BJ (cell line): ENCODE measurements at regions of chr12 and their contacts with region 1.

Region 1: GRCh38 chr12:63843721-63844390 is 644 bp upstream of the SRGAP1 start:
- DNase-seq: peak; percentile 76
- H3K4me3 ChIP-seq: peak overlapping the region; percentile 93
- H3K27me3 ChIP-seq: no peaks in the 10 kb centered on the region
- CTCF ChIP-seq: peak; percentile 86

Region 2: GRCh38 chr12:62758216-62758615 is 1085.6 kb before region 1 on chr12:
- CTCF ChIA-PET with region 1: no interaction called
- POLR2A ChIA-PET with region 1: no interaction called
- DNase-seq: no peak
- H3K4me3 ChIP-seq: no peak overlapping the region
- H3K27me3 ChIP-seq: no peaks in the 10 kb centered on the region
- CTCF ChIP-seq: no peak

Region 3: DNA sequence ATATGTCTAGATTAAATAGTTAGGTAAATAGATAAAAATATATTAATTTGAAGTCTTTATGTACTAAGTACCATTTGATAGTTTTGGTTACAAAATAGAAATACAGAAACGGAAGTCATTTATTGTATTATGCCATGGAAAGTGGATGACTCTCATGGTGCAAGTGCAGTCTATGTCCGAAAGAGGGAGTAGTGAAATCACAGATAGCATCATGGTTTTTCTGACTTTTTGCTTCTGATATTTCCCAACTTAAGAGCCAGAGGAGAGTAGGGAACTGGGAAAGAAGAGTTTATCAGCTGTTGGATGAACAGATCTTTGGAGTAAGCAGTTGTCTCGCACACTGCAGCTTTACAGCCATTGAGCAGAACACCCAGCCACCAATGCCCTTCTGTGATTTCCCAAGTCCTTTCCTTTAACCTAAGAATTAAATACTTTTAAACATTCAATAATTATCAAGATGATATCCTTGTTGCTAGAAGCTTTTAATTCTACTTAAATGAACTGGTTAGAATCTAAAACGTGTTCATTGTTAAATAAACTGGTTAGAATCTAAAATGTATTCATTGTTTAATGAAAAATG is 17.8 kb before region 1 on chr12:
- CTCF ChIA-PET with region 1: interaction called, 12 read pairs
- POLR2A ChIA-PET with region 1: no interaction called
- DNase-seq: no peak
- H3K4me3 ChIP-seq: no peak overlapping the region
- H3K27me3 ChIP-seq: no peaks in the 10 kb centered on the region
- CTCF ChIP-seq: peak; percentile 81

Region 4: GRCh38 chr12:63930971-63931370 is 87.1 kb after region 1 on chr12:
- CTCF ChIA-PET with region 1: interaction called, 13 read pairs
- POLR2A ChIA-PET with region 1: interaction called, 26 read pairs
- DNase-seq: peak; percentile 52
- H3K4me3 ChIP-seq: no peak overlapping the region
- H3K27me3 ChIP-seq: no peaks in the 10 kb centered on the region
- CTCF ChIP-seq: no peak

Region 5: DNA sequence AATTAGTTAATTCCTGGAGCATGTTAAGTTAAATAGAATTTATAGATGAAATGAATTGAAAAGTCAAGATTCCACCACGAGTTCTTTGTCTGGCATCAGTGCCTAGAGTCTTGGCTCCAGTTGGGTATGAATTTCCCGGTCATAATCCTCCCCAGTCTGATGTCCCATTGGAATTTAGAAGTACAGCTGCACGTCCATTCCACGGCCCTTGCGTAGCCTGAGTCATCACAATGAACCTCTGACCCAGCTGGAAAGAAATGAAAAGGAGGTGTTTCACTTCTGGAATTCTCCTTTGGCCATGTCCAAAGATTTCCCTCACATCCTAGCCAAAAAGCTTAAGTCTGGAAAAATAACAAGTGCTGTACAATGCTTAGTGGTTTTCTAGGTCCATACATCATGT is 255.5 kb after region 1 on chr12:
- CTCF ChIA-PET with region 1: interaction called, 10 read pairs
- POLR2A ChIA-PET with region 1: no interaction called
- DNase-seq: peak; percentile 68
- H3K4me3 ChIP-seq: no peak overlapping the region
- H3K27me3 ChIP-seq: no peaks in the 10 kb centered on the region
- CTCF ChIP-seq: no peak

Region 6: DNA sequence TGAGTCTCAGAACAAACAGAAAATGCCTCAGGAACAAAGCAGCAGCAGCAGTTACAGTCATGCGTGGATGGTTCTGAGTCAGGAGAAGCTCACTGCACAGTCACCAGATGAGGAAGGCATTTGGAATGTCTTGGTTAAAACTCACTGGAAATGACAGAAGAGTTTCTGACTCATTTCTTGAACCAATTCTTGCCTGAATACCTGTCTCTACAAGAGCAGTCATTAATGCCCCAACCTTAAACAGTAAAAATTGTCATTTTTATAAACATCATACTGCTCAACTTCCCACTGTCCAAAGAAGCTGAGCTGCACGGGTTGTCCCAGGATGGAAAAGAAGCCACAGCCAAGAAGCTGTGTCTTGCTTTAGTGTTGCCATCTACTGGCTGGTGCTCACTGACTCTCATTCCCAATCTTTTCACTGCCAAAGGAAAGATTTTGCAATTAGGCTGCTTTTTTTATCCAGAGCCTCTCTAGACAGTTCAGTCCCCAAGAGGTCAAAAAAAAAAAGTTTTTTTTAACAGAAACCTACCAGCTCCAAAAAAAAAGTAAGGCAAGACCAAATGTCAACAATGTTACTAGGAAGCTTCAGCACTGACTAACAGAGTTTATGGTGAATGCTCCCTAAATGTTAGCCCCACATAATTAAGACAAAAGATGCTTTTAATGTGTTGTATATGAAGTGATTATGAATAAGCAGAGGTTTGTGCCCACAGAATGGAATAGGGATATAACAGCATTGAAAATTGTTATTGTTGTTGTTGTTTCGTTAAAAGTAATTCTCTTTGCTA is 337.8 kb after region 1 on chr12:
- CTCF ChIA-PET with region 1: interaction called, 27 read pairs
- POLR2A ChIA-PET with region 1: no interaction called
- DNase-seq: peak; percentile 95
- H3K4me3 ChIP-seq: no peak overlapping the region
- H3K27me3 ChIP-seq: no peaks in the 10 kb centered on the region
- CTCF ChIP-seq: peak; percentile 70

Region 7: DNA sequence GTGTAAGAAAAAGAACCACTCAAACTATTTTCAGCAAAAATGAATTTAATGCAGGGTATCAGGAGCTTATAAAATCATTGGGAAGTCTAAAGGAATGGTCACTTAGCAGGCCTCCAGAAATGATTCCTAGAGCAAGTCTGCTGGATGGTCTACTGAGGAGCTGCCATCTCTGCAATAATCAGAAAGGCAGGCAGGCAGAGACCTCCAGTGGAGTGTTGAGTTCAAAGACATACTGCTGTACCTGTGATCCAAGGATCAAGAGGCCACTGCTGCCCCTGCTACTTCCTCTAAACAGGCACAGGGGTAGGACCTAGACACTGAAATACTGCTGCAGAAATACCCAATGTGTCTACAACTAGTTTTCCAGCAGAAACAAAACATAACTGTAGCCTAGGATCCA is 392.7 kb after region 1 on chr12:
- CTCF ChIA-PET with region 1: interaction called, 16 read pairs
- POLR2A ChIA-PET with region 1: no interaction called
- DNase-seq: no peak
- H3K4me3 ChIP-seq: no peak overlapping the region
- H3K27me3 ChIP-seq: no peaks in the 10 kb centered on the region
- CTCF ChIP-seq: 0 out of 2 replicates have a peak, but pooled peaks have one; percentile 5

Region 8: DNA sequence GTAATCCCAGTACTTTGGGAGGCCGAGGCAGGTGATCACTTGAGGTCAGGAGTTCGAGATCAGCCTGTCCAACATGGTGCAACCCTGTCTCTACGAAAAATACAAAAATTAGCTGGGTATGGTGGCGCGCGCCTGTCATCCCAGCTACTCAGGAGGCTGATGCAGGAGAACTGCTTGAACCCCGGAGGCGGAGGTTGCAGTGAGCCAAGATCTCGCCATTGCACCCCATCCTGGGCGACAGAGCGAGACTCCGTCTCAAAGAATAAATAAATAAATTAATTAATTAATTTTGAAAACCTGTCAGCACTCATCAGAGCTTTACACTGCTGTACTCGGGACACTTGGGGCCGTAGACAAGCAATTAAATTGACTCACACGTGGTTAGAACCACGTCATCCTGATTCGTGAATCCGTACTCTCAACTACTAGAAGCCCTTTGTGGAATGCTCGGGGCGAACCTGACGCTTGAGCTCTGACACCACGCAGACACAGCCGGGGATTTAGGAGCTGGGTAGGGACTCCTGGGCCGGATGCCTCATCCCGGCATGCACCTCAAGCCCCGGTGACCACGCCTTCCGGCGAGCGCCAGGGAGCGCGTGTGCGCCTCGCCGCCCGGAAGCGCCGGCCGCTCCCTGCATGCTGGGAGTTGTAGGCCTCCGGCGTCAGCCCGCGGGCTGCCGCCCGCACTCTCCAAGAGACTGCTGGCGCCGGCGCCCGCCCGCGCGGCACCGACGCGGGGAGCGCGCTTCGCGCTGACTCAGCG is 560.0 kb after region 1 on chr12 and contains the start of gene XPOT:
- CTCF ChIA-PET with region 1: no interaction called
- POLR2A ChIA-PET with region 1: no interaction called
- DNase-seq: peak; percentile 87
- H3K4me3 ChIP-seq: peak within 1 kb of the TSS; percentile 88
- H3K27me3 ChIP-seq: no peaks in the 10 kb centered on the region
- CTCF ChIP-seq: no peak
- polyA plus RNA-seq, gene XPOT: 77.4 and 188 TPM in 2 replicates